ENCODE measurements at regions of chr1 and their contacts with region 1.

Region 1: DNA sequence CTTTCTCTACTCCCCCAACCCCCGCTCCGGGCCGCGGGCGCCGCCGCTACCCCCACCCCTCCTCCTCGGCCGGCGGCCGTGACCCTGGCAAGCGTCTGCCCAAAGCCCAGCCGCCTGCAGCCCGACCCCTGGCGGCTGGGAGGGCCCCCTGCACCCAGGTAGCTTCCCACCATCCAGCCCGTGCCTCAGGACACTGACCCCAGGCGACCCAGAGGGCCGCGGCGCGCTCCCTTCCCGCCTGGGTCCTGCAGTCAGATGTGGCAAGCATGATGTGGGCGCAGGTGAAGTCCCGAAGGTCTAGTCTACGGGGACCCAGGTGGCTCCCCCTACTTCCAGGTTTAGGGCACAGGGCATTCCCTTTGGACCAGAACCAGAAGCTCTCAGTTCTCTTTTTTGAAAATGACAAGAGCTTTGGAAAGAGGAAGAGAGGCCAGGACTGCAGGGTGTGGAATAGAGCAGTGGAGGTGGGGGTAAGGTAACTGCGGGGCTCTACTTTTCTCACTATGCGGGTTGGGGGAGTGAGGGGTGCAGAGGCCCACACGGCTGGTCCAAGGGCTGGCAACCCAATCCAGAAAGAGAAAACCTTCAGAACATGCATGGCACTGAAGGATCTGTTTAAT is at the start of gene DENND4B:
- DNase-seq: peak; percentile 82
- H3K4me3 ChIP-seq: peak within 1 kb of the TSS; percentile 98
- H3K27ac ChIP-seq: peak within 1 kb of the TSS; percentile 94
- H3K4me1 ChIP-seq: peaks cover 6% of the 10 kb centered on the region
- H3K27me3 ChIP-seq: no peaks in the 10 kb centered on the region
- CTCF ChIP-seq: peak; percentile 91
- total RNA-seq, gene DENND4B: 61.5 and 66.6 TPM in 2 replicates

Region 2: GRCh38 chr1:153796791-153797659 is 149.7 kb before region 1 on chr1:
- CTCF ChIA-PET with region 1: no interaction called
- POLR2A ChIA-PET with region 1: no interaction called
- intact Hi-C with region 1: loop called (anchors 2 kb)
- DNase-seq: peak; percentile 78
- H3K4me3 ChIP-seq: no peak overlapping the region
- H3K27ac ChIP-seq: no peak overlapping the region
- H3K4me1 ChIP-seq: no peaks in the 10 kb centered on the region
- H3K27me3 ChIP-seq: no peaks in the 10 kb centered on the region
- CTCF ChIP-seq: peak; percentile 87

Region 3: GRCh38 chr1:153928791-153929341 is 17.9 kb before region 1 on chr1:
- CTCF ChIA-PET with region 1: interaction called, 14 read pairs
- POLR2A ChIA-PET with region 1: interaction called, 7 read pairs
- intact Hi-C with region 1: no loop called
- DNase-seq: peak; percentile 64
- H3K4me3 ChIP-seq: no peak overlapping the region
- H3K27ac ChIP-seq: peak overlapping the region; percentile 54
- H3K4me1 ChIP-seq: peaks cover 19% of the 10 kb centered on the region
- H3K27me3 ChIP-seq: no peaks in the 10 kb centered on the region
- CTCF ChIP-seq: no peak

Region 4: DNA sequence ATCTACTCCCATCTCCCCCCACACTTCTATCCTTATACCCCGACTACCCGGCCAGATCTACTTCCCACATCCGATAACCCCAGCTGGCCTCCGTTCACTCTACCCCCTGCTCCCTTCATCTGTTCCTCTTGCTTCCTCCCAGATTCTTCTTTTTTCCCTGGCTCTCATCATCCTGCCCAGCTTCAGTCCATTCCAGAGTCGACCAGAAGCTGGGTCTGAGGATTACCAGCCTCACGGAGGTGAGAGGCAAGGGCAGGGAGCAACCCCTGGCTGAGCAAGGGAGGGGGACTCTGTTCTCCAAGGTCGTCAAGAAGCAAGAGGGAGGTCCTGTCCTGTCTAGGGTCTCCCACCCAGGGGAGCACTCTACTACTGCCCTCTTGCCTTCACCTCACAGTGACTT is 26.7 kb after region 1 on chr1:
- CTCF ChIA-PET with region 1: no interaction called
- POLR2A ChIA-PET with region 1: interaction called, 16 read pairs
- intact Hi-C with region 1: no loop called
- DNase-seq: no peak
- H3K4me3 ChIP-seq: no peak overlapping the region
- H3K27ac ChIP-seq: peak overlapping the region; percentile 11
- H3K4me1 ChIP-seq: peaks cover 12% of the 10 kb centered on the region
- H3K27me3 ChIP-seq: no peaks in the 10 kb centered on the region
- CTCF ChIP-seq: no peak

Region 5: GRCh38 chr1:155185351-155186066 is 1238.8 kb after region 1 on chr1:
- CTCF ChIA-PET with region 1: interaction called, 10 read pairs
- POLR2A ChIA-PET with region 1: no interaction called
- intact Hi-C with region 1: no loop called
- DNase-seq: no peak
- H3K4me3 ChIP-seq: no peak overlapping the region
- H3K27ac ChIP-seq: no peak overlapping the region
- H3K4me1 ChIP-seq: no peaks in the 10 kb centered on the region
- H3K27me3 ChIP-seq: no peaks in the 10 kb centered on the region
- CTCF ChIP-seq: no peak